ENCODE measurements at regions of chr1 and their contacts with region 1.

Region 1: DNA sequence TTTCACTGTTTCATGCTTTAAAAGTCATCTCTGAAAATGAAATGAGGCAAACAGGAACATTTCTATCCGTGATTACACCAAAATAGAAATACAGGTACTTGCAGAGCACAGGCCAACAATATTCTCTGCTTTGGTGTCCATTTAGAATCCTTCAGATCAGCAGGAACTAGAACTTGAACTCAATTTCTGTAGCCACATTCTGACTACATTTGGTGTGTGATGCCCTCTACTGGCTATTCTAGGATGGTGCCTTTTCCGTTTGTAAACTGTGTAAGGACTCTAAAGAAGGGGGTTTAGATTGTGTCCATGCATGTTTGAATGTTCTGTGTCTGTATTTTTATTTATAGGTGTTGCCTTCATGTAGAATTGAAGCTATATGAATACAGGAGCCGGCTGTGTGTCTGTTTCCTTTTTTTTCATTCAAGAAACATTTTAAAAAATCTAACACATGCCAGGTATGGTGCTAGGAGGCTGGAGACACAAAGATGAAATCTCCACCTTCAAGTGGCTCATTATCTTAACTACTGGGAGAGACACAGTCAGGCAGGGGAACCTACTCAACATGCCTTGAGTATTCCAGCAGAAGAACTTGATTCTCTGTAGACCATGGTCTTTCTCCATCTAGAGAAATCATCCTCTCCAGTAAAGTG is 7.6 kb upstream of the ZNF326 start:
- DNase-seq: no peak
- ATAC-seq: peak; percentile 89

Region 2: GRCh38 chr1:89483010-89483756 is 504.1 kb before region 1 on chr1:
- intact Hi-C with region 1: loop called (anchors 10 kb)
- DNase-seq: peak; percentile 51
- ATAC-seq: peak; percentile 59

Region 3: DNA sequence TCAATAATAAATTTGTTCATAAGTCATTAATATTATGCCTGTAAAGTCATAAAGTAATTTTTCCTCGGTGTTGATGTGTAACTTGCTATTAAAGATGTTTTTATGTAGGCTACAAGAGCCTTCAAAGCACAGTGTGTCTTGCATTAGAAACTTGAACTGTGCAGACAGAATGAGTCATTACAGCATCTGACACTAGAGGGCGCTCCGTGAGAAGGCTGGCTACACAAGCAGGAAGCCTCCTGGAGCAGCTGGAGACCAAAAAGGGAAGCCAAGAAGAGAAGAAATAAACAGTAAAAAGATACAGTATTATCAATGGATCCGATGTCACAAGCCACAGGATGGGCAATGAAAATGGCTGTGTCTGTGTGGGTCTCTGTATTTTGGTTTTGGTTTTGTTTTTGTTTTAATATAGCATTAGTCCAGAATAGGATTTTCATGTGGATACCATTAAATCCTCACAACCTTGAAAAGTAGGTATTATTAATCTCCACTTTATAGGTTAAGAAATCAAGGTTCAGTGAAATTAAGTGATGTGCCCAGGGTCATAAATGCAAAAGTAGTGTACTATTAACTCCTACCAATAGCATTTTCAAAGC is 182.6 kb before region 1 on chr1:
- intact Hi-C with region 1: loop called (anchors 1 kb)
- DNase-seq: peak; percentile 85
- ATAC-seq: peak; percentile 89

Region 4: DNA sequence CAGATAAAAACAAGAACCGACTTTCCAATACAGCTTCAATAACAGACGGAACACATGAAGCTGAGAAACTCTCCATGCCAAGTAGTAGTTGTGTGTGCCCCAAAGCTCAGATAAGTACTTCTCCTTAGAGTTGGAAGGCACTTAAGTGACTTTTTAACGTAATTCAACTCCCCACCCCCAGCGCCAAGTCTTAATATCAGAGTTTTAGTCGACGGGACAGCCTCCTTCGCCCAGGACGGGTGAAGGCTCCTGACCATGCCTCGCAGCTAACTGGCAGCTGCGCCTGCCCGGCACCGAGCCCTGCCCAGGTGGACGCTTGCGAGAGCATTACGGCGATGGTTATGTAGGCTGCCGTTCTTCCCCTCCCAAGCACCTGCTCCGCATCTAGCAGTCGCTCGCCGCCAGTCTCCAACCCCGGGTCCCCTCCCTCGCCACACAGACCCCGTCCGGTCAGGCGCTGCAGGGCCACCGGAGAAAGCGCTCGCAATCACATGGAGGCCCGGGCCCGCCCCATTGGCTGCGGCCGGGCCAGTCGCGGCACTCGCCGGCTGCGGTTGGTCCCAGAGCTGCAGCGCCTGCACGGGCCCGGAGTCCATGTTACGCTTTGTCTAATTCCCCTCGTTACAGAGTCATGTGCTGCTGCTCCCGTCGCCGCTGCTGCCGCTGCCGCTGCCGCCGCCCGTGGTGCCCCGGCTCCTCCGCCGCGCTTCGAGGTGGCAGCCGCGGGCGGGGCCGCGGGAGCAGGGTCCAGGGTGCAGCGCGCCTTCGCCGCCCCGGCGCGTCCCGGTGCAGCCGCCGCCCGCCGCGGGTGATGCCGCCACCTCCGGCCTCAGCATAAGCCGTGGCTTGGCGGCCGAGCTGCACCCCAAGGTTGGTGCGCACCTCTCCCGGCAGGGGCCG is 166.6 kb before region 1 on chr1 and contains the start of gene LRRC8D:
- intact Hi-C with region 1: loop called (anchors 5 kb)
- DNase-seq: peak; percentile 92
- ATAC-seq: peak; percentile 95
- total RNA-seq, gene LRRC8D: 6.2 TPM

Region 5: DNA sequence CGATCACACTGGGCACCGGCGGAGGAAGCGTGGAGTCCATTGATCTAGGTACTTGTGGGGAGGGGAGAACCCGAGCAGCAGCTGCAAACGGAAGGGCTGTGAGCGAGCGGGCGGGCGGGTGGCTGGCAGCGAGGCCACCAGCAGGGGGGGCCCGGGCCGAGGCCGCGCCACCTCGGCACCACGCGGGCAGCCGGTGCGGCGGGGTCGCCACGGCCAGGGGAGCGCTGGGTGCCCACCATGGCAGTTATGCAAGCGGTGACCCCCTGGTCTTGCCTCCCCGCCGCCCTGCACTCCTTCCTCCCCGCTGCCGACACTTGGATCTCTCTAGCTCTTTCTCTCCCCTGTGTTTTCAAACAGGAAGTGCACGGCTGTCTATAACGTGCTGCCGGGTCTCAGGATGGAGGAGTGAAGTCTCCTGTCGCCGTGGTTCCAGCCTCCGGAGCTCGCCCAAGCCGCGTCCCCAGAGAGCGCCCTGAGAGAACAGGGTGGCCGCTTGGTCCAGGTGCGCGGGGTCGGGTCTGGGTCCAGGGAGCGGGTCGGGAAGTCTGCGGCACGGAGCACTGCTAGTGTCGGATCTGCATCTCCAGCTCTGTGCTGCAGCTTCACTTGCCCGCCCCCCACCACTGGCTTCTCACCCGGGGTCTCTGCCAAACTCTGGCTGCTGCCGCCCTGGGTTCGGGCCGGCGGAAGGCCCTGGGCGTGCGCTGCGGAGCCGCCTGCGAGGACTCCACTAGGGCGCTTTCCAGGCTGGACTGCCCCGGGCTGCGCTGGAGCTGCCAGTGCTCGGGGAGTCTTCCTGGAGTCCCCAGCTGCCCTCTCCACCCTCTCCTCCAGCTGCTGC is 143.8 kb before region 1 on chr1:
- intact Hi-C with region 1: loop called (anchors 10 kb)
- DNase-seq: peak; percentile 90
- ATAC-seq: peak; percentile 94

Region 6: GRCh38 chr1:90027281-90027680 is 40.0 kb after region 1 on chr1:
- intact Hi-C with region 1: no loop called
- DNase-seq: no peak
- ATAC-seq: no peak

Measured in Right ventricle myocardium inferior (tissue), 1 donor.